ENCODE measurements at regions of chr3 and their contacts with region 1.

Region 1: DNA sequence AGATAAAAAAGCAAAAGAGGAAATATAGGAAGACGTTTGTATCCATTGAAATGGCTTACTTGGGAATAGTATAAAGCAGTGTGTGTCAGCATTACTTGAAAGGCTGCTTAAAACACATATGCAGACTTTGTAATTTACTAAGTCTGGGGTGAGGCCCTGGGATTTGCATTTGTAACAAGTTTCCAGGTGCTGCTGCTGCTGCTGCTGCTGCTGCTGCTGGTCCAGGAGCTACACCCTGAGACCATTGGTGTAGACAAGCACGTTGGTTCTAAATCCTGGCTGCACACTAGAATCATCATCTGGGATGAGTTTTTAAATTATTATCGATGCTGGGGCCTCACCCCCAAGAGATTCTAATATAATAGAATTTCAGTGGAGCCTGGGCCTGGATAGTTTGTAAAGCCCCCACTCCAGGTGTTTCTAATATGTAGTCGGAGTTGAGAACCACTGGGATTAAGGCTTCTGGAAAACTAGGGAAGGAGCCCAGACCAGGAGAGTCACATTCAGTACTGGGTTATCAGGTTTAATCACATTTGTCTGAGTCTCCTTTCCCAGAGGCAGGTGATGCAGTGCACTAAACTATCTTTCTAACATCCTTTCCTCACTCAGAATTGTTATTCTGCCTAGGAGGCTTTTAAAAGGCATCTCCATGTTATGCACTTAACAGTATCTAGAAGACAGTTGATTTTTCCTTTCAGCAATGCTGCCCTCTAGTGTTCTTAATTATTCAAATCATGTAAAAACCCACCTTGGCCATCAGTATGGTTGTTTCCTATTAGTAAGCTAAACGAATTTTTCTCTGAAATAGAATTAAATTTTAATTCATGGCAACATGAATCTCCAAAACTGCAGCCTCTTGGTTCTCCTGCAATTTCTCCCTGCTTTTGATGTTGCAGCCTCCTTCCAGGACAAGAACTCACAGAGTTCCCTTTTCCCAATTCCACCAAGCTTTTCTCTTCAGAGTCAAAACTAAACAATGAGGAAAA is 45.4 kb downstream of the SSR3 start:
- DNase-seq: no peak
- H3K4me3 ChIP-seq: no peak overlapping the region
- H3K27ac ChIP-seq: no peak overlapping the region
- H3K4me1 ChIP-seq: no peaks in the 10 kb centered on the region
- H3K27me3 ChIP-seq: no peaks in the 10 kb centered on the region
- CTCF ChIP-seq: peak in 2 of 3 experiments; percentile 31 to 39

Region 2: GRCh38 chr3:156024904-156025533 is 484.5 kb before region 1 on chr3:
- dilution Hi-C with region 1: loop called (anchors 25 kb)
- DNase-seq: no peak
- H3K4me3 ChIP-seq: peak overlapping the region in 1 of 3 experiments; percentile 26
- H3K27ac ChIP-seq: no peak overlapping the region
- H3K4me1 ChIP-seq: peaks cover 5% of the 10 kb centered on the region
- H3K27me3 ChIP-seq: no peaks in the 10 kb centered on the region
- CTCF ChIP-seq: no peak

Region 3: GRCh38 chr3:156151824-156152428 is 357.6 kb before region 1 on chr3:
- dilution Hi-C with region 1: loop called (anchors 25 kb)
- DNase-seq: peak; percentile 15
- H3K4me3 ChIP-seq: peak overlapping the region in 1 of 3 experiments; percentile 19
- H3K27ac ChIP-seq: no peak overlapping the region
- H3K4me1 ChIP-seq: peaks cover 3% of the 10 kb centered on the region
- H3K27me3 ChIP-seq: no peaks in the 10 kb centered on the region
- CTCF ChIP-seq: peak; percentile 83 to 97 (median 90)

Region 4: DNA sequence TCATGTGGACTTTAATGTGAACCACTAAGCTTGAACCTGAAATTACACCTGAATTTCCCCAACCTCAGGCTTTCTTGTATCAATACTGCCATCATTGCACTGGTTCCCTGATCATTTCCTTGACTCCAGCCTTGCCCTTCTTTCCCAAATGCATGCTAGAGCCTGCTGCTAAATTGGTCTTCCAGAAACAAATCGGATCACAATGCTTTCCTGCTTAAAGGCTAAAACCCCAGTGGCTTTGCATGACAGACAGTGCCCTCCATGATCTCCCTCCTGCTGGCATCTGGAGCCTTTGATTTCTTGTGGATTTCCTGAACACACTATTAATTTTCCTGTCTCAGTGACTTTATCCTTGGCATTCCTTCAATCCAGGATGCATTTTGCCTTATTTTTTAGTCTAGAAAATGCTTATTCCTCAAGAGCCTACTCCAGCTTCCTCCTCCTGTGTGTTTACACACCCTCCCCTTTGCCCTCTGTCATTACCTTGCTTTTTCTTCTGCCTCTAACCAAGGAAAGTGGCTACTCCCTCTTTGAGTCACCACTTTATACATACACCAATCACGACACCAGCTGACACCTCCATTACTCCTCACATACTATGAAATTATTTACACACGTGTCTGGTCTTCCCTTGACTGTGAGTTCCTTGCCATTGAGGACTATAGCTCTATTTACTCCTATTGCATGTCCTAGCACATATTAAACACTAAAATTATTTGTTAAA is 174.5 kb before region 1 on chr3:
- dilution Hi-C with region 1: no loop called
- DNase-seq: no peak
- H3K4me3 ChIP-seq: no peak overlapping the region
- H3K27ac ChIP-seq: no peak overlapping the region
- H3K4me1 ChIP-seq: no peaks in the 10 kb centered on the region
- H3K27me3 ChIP-seq: no peaks in the 10 kb centered on the region
- CTCF ChIP-seq: no peak

Measured in keratinocyte (primary cell).